AG04449 (cell line): ENCODE measurements at regions of chr1 and their contacts with region 1.

Region 1: DNA sequence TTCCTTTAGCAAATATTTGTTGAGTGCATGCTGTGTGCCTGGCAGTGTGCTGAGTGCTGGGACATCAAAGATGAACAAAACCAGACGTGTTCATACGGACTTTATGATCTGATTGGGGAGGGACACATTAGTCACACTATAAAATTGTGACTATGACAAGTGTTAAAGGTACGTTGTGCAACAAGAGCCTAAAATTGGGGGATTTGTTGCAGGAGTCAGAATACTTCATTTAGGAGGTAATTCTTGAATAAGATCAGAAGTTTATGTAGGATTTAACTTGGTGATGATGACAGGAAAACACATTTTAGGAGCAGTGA is 29.6 kb downstream of the B3GALT2 start:
- DNase-seq: no peak
- H3K4me3 ChIP-seq: no peak overlapping the region
- CTCF ChIP-seq: no peak

Region 2: GRCh38 chr1:192747942-192748341 is 408.8 kb before region 1 on chr1:
- CTCF ChIA-PET with region 1: no interaction called
- POLR2A ChIA-PET with region 1: no interaction called
- DNase-seq: no peak
- H3K4me3 ChIP-seq: no peak overlapping the region
- CTCF ChIP-seq: no peak

Region 3: GRCh38 chr1:193131266-193131860 is 25.4 kb before region 1 on chr1:
- CTCF ChIA-PET with region 1: no interaction called
- POLR2A ChIA-PET with region 1: no interaction called
- DNase-seq: no peak
- H3K4me3 ChIP-seq: no peak overlapping the region
- CTCF ChIP-seq: no peak

Region 4: DNA sequence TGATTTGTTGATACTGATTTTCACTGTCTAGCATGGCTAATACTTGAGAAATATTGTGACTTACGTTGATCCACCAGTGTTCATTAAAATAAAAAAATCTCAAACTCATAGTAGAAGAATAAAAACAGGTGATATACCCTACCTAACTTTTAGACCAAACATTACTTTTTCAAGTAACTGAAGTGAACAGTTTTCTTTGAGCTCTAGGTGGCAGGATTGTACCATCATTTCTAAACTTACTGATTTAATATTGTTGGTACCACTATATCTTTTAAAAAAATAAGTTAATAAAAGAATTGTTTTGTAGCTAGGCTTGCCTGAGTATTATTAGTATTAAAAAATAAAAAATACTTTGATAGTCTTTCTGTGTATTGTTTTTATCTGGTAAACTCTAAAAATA is 13.5 kb before region 1 on chr1:
- CTCF ChIA-PET with region 1: interaction called, 12 read pairs
- POLR2A ChIA-PET with region 1: no interaction called
- DNase-seq: no peak
- H3K4me3 ChIP-seq: no peak overlapping the region
- CTCF ChIP-seq: peak; percentile 9